Gastrocnemius medialis (tissue), 4 donors: ENCODE measurements at regions of chr14 and their contacts with region 1.

Region 1: DNA sequence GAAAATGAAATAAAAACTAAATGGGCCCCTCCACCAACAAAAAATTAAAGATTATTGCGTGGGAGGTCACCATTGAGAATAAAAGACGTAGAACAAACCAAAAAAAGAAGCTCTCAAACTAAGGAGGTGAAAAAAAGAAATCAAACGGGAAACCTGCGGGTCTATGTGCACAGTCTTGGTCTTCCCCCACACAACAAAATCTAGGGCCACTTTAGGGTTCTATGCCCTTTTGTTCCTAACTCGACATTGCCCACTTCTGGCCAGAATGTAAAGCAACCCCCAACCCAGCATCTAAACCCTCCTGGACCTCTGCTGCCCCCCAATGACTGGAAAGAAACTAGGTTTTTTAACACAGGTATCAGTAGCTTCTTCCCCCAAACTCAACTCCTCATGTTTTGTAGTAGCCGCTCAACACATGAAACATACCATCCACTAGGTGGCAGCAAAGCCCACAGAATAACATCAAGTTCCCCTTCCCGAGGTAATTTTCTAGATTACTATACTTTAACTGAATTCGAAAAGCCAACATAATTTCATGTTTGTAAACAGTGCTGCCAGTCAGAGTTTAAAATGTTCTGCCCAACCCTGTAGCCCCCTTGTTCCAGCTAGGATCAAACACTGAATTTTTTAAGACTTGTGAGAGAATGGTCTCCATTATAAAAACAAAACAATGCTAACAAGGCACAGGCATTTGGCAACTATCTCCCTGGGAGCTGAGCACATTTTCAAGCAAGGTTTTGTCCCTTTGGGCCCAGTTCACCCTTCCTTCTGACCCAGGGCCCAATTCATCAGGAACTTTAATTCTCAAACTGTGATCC is 18.7 kb downstream of the DAD1 start:
- DNase-seq: peak; percentile 35 to 56
- ATAC-seq: peak; percentile 58 to 82
- H3K4me3 ChIP-seq: no peak overlapping the region
- H3K27ac ChIP-seq: peak overlapping the region in 3 of 4 donors; percentile 0 to 39 (median 39)
- H3K4me1 ChIP-seq: peaks cover 21 to 28% of the 10 kb centered on the region in 2 donors
- H3K27me3 ChIP-seq: no peaks in the 10 kb centered on the region
- CTCF ChIP-seq: peak; percentile 75 to 90 (median 84)
- POLR2A ChIP-seq: no peak

Region 2: GRCh38 chr14:21699551-21699950 is 870.8 kb before region 1 on chr14:
- in situ Hi-C with region 1: no loop called
- intact Hi-C with region 1: no loop called
- DNase-seq: no peak
- ATAC-seq: no peak
- H3K4me3 ChIP-seq: no peak overlapping the region
- H3K27ac ChIP-seq: no peak overlapping the region
- H3K4me1 ChIP-seq: no peaks in the 10 kb centered on the region
- H3K27me3 ChIP-seq: no peaks in the 10 kb centered on the region
- CTCF ChIP-seq: no peak
- POLR2A ChIP-seq: no peak

Region 3: DNA sequence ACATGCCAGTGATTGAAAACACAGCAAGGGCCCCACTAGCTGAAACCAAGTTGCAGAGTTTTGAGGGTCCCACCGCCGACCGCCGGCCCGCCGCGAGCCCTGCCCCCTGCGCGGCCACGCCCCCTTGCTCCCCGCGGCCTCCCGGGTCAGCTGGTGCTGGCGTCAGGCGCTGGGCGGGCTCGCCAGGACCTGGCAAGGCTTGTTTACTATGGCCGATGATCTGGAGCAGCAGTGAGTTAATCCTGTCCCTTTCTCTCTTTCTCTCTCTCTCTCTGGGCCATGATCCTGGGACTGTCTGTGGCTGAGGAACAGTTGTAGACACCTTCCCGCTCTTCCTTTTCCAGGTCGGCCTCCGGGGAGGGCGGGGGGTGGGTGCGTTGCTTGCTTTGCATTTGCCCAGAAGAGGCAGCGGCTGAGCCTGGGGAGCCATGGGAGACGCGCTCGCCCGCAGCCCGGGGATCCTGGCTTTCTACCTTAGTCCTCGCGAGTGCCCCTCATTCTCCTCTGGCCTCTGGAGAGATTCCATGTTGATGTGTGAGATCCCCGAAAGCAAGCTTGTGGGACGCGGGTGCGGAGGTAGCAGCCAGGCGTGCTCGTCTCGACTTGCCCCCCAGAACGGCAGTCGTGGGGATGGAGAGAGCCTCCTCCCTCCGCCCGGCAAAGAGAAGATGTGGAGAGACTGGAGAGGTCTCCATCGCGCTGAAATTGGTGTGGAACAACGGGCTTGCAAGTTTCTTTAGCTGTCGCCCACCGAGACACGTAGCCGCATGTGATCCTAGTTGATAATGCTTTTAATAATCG is 28.0 kb after region 1 on chr14 and contains the start of gene ABHD4:
- in situ Hi-C with region 1: no loop called
- intact Hi-C with region 1: loop called (anchors 2 kb)
- DNase-seq: peak; percentile 74 to 83
- ATAC-seq: peak; percentile 89 to 92
- H3K4me3 ChIP-seq: peak within 1 kb of the TSS; percentile 77 to 91 (median 85)
- H3K27ac ChIP-seq: peak within 1 kb of the TSS; percentile 89 to 98 (median 94)
- H3K4me1 ChIP-seq: peaks cover 21 to 30% of the 10 kb centered on the region in 2 donors
- H3K27me3 ChIP-seq: no peaks in the 10 kb centered on the region
- CTCF ChIP-seq: no peak
- POLR2A ChIP-seq: peak; percentile 80 to 89
- total RNA-seq, gene ABHD4: 17.1 to 38.7 (median 27.6) TPM

Region 4: GRCh38 chr14:22653012-22653621 is 82.8 kb after region 1 on chr14:
- in situ Hi-C with region 1: loop called (anchors 5 to 10 kb)
- intact Hi-C with region 1: loop called (anchors 1 kb)
- DNase-seq: peak in 1 of 2 donors; percentile 33
- ATAC-seq: peak; percentile 58 to 70
- H3K4me3 ChIP-seq: no peak overlapping the region
- H3K27ac ChIP-seq: no peak overlapping the region
- H3K4me1 ChIP-seq: peaks cover 0 to 4% of the 10 kb centered on the region in 2 donors
- H3K27me3 ChIP-seq: no peaks in the 10 kb centered on the region
- CTCF ChIP-seq: peak; percentile 50 to 68 (median 65)
- POLR2A ChIP-seq: no peak

Region 5: GRCh38 chr14:22955702-22956569 is 385.6 kb after region 1 on chr14:
- in situ Hi-C with region 1: no loop called
- intact Hi-C with region 1: no loop called
- DNase-seq: no peak
- ATAC-seq: no peak
- H3K4me3 ChIP-seq: peak overlapping the region; percentile 71 to 82 (median 82)
- H3K27ac ChIP-seq: peak overlapping the region; percentile 90 to 95 (median 94)
- H3K4me1 ChIP-seq: peaks cover 9 to 17% of the 10 kb centered on the region in 2 donors
- H3K27me3 ChIP-seq: no peaks in the 10 kb centered on the region
- CTCF ChIP-seq: no peak
- POLR2A ChIP-seq: no peak